ENCODE measurements at regions of chr2 and their contacts with region 1.

Region 1: GRCh38 chr2:177296040-177296439 is 31.5 kb upstream of the NFE2L2 start:
- DNase-seq: no peak
- ATAC-seq: peak; percentile 62
- H3K4me3 ChIP-seq: no peak overlapping the region
- H3K27ac ChIP-seq: no peak overlapping the region
- H3K4me1 ChIP-seq: no peaks in the 10 kb centered on the region
- H3K27me3 ChIP-seq: no peaks in the 10 kb centered on the region
- CTCF ChIP-seq: peak in 6 of 7 experiments; percentile 22 to 56 (median 48)
- POLR2A ChIP-seq: no peak

Region 2: DNA sequence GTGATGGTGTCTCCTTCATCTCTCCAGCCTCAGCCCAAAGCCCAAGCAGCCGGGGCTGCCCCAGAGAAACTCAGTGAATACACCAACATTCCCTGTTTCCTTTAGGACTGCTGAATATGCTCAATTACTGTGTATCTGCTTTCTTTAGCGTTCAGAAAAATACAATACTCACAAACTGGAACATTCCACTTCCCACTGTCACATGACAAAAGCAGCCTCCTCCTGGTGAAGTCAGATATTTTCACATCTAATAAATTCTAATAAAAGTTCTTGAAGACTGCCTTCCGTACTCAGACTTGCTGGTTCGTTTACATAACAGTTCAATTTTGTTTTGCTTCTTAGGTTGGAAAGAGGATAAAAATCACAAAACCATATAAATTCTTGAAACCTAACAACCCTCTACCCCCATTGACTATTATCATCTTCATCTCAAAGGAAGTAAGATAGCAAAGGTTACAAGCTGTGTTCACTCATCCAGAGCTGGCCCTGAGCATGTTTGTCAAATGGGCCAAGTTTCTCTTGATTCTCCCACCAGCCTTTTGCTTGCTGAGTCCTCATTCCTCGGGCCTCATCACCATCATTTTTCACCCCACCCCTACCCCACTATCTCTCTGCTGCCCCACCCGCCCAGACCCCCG is 274.2 kb before region 1 on chr2:
- intact Hi-C with region 1: no loop called
- DNase-seq: no peak
- ATAC-seq: no peak
- H3K4me3 ChIP-seq: no peak overlapping the region
- H3K27ac ChIP-seq: no peak overlapping the region
- H3K4me1 ChIP-seq: no peaks in the 10 kb centered on the region
- H3K27me3 ChIP-seq: no peaks in the 10 kb centered on the region
- CTCF ChIP-seq: no peak
- POLR2A ChIP-seq: no peak

Region 3: GRCh38 chr2:177187631-177188312 is 108.3 kb before region 1 on chr2:
- intact Hi-C with region 1: loop called (anchors 10 kb)
- DNase-seq: no peak
- ATAC-seq: no peak
- H3K4me3 ChIP-seq: no peak overlapping the region
- H3K27ac ChIP-seq: no peak overlapping the region
- H3K4me1 ChIP-seq: no peaks in the 10 kb centered on the region
- H3K27me3 ChIP-seq: no peaks in the 10 kb centered on the region
- CTCF ChIP-seq: no peak
- POLR2A ChIP-seq: no peak

Region 4: DNA sequence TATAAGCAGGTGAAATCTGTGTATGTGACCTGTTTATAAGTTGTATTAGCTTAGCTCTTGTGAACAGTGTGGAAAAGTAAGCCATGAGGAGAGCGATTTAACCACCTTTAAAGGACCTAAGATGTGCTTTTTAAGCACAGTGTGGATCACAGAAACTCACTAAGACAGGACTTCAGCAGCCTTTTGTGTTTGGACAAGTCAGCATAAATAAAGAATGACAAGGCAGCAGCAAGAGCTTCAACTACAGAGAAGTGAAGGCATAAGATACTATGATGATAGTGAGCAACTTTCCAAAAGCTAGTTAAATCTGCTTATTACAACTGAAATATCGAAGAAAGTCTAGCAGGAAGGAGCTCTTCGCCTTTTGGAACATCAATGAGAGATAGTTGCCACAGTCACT is 74.5 kb before region 1 on chr2:
- intact Hi-C with region 1: no loop called
- DNase-seq: no peak
- ATAC-seq: no peak
- H3K4me3 ChIP-seq: no peak overlapping the region
- H3K27ac ChIP-seq: no peak overlapping the region
- H3K4me1 ChIP-seq: peaks cover 24% of the 10 kb centered on the region
- H3K27me3 ChIP-seq: no peaks in the 10 kb centered on the region
- CTCF ChIP-seq: no peak
- POLR2A ChIP-seq: no peak

Measured in body of pancreas (tissue), 4 donors.